PC-3 (cell line): ENCODE measurements at regions of chr7 and their contacts with region 1.

Region 1: DNA sequence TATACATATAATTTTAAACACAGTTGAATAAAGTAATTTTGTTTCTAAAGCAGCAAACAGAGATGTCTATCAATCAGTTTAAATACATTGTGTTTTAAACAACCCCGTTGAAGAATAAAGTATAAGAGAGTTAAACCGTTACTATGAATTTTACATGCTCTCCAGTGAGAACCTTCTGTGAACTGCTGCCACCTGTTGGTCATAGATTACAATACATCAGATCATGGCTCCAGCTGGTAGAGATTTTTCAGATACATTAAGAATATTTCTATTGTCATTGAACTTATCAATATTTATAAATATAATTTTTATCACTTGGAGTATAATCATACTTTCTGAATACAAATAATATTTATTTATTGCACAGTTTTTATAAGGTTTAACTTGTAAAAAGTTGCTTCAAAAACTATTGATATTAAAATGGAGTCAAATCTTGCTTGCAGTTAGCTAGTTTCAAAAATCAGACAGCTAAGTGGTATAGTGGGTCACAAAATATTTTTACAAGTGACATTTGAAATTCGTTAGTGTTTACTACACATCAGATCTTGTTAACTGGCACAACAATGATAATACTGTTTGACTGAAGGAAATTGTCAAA is 561.2 kb upstream of the PHF14 start:
- DNase-seq: peak; percentile 48
- ATAC-seq: peak; percentile 57; the same call in 1 of the 2 replicates
- H3K4me3 ChIP-seq: no peak overlapping the region
- H3K27ac ChIP-seq: no peak overlapping the region
- H3K4me1 ChIP-seq: no peaks in the 10 kb centered on the region
- H3K27me3 ChIP-seq: no peaks in the 10 kb centered on the region
- CTCF ChIP-seq: peak; percentile 54

Region 2: GRCh38 chr7:8418629-8419245 is 1993.8 kb before region 1 on chr7:
- CTCF ChIA-PET with region 1: no interaction called
- POLR2A ChIA-PET with region 1: no interaction called
- intact Hi-C with region 1: loop called (anchors 2 kb)
- DNase-seq: peak; percentile 70
- ATAC-seq: peak; percentile 94
- H3K4me3 ChIP-seq: no peak overlapping the region
- H3K27ac ChIP-seq: no peak overlapping the region
- H3K4me1 ChIP-seq: no peaks in the 10 kb centered on the region
- H3K27me3 ChIP-seq: no peaks in the 10 kb centered on the region
- CTCF ChIP-seq: peak; percentile 86

Region 3: GRCh38 chr7:9264394-9264793 is 1148.1 kb before region 1 on chr7:
- CTCF ChIA-PET with region 1: no interaction called
- POLR2A ChIA-PET with region 1: no interaction called
- intact Hi-C with region 1: loop called (anchors 2 kb)
- DNase-seq: no peak
- ATAC-seq: peak; percentile 61
- H3K4me3 ChIP-seq: no peak overlapping the region
- H3K27ac ChIP-seq: no peak overlapping the region
- H3K4me1 ChIP-seq: no peaks in the 10 kb centered on the region
- H3K27me3 ChIP-seq: no peaks in the 10 kb centered on the region
- CTCF ChIP-seq: peak; percentile 18; the same call in 1 of the 2 replicates

Region 4: GRCh38 chr7:10022957-10023356 is 389.6 kb before region 1 on chr7:
- CTCF ChIA-PET with region 1: no interaction called
- POLR2A ChIA-PET with region 1: no interaction called
- intact Hi-C with region 1: loop called (anchors 2 kb)
- DNase-seq: peak; percentile 65
- ATAC-seq: peak; percentile 77
- H3K4me3 ChIP-seq: no peak overlapping the region
- H3K27ac ChIP-seq: no peak overlapping the region
- H3K4me1 ChIP-seq: no peaks in the 10 kb centered on the region
- H3K27me3 ChIP-seq: no peaks in the 10 kb centered on the region
- CTCF ChIP-seq: peak; percentile 33; the same call in 1 of the 2 replicates

Region 5: GRCh38 chr7:10266976-10267375 is 145.5 kb before region 1 on chr7:
- CTCF ChIA-PET with region 1: no interaction called
- POLR2A ChIA-PET with region 1: no interaction called
- intact Hi-C with region 1: loop called (anchors 5 kb)
- DNase-seq: no peak
- ATAC-seq: no peak
- H3K4me3 ChIP-seq: no peak overlapping the region
- H3K27ac ChIP-seq: no peak overlapping the region
- H3K4me1 ChIP-seq: no peaks in the 10 kb centered on the region
- H3K27me3 ChIP-seq: no peaks in the 10 kb centered on the region
- CTCF ChIP-seq: no peak

Region 6: DNA sequence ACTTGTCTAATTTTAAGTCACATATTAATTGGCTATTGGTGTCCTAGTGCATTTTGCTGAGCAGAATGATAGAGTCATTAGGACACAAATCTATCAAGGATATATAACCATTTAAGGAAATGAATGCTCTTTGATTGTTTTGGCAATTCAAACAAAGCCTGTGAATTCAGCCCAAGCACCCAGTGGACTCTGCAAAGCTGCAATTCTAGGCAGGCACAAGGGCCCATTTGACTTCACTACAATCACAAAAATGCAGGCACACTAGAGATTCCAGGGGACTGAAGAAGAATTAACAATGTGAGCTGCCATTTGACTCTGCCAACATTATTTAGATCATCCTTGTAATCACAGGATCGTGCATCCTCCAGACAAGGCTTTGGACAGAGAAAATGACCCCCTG is 17.0 kb after region 1 on chr7:
- CTCF ChIA-PET with region 1: no interaction called
- POLR2A ChIA-PET with region 1: no interaction called
- intact Hi-C with region 1: no loop called
- DNase-seq: no peak
- ATAC-seq: no peak
- H3K4me3 ChIP-seq: no peak overlapping the region
- H3K27ac ChIP-seq: no peak overlapping the region
- H3K4me1 ChIP-seq: no peaks in the 10 kb centered on the region
- H3K27me3 ChIP-seq: no peaks in the 10 kb centered on the region
- CTCF ChIP-seq: no peak

Region 7: GRCh38 chr7:11343818-11344413 is 931.4 kb after region 1 on chr7:
- CTCF ChIA-PET with region 1: no interaction called
- POLR2A ChIA-PET with region 1: no interaction called
- intact Hi-C with region 1: loop called (anchors 5 kb)
- DNase-seq: peak; percentile 78
- ATAC-seq: no peak; the same call in 1 of the 2 replicates
- H3K4me3 ChIP-seq: peak overlapping the region; percentile 40; the same call in 1 of the 2 replicates
- H3K27ac ChIP-seq: no peak overlapping the region
- H3K4me1 ChIP-seq: no peaks in the 10 kb centered on the region
- H3K27me3 ChIP-seq: no peaks in the 10 kb centered on the region
- CTCF ChIP-seq: peak; percentile 81